ENCODE measurements at regions of chr17 and their contacts with region 1.

Region 1: DNA sequence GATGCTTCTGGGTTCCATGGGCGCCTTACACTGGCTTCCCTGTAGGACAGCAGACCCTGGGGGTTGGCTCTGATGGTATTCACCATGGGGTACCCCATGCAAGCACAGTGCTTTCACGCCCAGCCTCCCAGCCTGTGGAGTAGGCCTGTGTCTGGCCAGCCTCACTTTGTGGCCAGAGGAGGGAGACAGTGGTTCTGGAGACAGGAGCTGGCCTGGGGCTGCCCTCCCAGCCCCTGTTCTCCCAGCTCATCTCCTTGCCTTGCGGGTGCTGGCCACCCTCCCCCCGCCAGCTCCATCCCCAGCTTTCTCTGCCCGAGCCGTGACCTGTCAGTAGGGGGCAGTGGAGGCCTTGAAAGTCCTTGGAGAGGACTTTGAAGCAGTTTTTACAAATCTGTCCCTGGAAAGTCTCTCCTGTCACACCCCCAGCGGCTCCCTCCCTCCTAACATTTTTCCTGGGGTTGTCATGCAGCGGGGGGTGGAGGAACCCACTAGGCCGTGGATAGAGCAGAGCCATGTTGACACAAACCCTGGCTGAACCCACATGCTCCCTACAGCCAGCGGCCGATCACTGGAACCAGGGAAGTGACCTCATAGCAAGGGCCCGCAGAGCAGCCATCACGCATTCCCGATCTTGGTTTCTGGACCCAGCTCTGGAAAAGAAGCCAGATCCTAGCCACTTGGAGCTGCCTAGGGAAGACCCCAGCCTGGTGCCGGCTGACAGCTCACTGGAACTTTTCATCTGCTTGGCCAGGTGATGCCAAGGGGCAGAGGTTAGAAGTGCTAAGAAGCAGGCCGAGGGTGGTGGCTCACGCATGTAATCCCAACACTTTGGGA is 289.4 kb downstream of the SEC14L1 start:
- DNase-seq: peak; percentile 76
- H3K4me3 ChIP-seq: no peak overlapping the region
- H3K27ac ChIP-seq: peak overlapping the region; percentile 4
- H3K4me1 ChIP-seq: peaks cover 53% of the 10 kb centered on the region
- H3K27me3 ChIP-seq: no peaks in the 10 kb centered on the region
- CTCF ChIP-seq: peak; percentile 66 to 81

Region 2: DNA sequence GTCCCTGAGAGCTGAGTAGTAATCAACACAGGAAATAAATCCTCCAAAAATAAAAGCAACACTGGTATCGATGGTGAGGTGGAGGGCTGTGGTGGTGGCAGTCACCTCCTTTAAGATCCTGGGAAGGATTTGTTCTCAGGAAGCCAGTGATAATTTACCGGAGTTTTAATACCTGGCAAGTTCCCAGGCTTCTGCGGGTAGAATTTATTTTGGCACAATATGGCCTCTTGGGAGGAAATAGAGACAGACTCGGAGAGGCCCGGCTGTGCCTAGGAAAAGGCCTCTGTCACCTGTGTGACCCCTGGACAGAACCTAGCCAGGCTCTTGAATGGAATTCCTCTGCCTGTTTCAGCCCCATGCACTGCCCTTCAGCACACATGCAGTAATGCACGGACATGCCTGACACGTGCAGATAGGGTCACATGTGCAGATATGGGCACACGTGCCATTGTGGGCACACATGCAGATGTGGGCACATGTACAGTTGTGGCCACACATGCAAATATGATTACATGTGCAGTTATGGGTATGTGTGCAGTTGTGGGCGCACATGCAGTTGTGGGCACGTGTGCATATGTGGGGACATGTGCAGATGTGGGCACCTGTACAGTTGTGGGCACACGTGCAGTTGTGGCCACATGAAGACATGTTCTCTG is 528.5 kb before region 1 on chr17:
- CTCF ChIA-PET with region 1: no interaction called
- dilution Hi-C with region 1: no loop called
- in situ Hi-C with region 1: no loop called
- intact Hi-C with region 1: no loop called
- DNase-seq: no peak
- H3K4me3 ChIP-seq: no peak overlapping the region
- H3K27ac ChIP-seq: no peak overlapping the region
- H3K4me1 ChIP-seq: no peaks in the 10 kb centered on the region
- H3K27me3 ChIP-seq: no peaks in the 10 kb centered on the region
- CTCF ChIP-seq: no peak

Region 3: DNA sequence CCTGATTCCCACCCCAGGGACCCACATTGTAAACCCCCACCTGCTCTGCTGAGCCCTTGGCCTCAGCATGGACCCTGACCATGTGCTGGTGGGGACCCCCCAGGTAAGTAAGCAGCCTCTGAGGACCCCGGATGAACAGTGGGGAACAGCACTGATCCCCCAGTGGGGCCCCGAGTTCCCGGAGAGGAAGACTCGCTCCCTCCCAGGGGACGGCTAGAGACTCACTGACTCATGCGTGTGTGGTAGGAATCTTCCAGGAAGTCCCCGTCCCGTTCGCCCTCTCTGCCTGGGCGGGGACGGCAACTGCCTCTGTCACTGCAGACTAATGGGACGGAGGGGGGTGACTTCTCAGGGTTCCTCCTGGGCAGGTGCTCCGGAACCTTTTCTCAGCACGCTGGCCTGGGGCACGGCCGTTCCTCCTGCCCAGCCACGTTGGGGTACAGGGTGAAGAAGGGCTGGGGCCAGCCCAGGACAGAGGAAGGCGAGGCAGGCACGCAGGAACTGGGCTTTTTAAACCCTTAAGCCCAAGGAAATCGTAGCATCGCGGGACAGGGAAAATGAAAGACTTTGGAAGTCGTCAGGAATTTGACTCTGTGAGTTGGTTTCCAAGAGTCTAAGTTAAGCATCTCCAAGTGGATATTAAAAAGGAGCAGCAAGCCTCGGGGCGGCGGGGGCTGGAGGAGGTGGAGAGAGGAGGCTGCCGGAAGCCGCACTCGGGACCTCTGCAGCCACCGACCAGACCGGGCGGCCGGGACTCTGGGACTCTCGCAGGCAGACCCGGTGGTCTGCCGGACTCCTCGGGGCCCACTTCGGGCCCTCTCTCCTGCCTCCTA is 110.7 kb before region 1 on chr17:
- CTCF ChIA-PET with region 1: no interaction called
- dilution Hi-C with region 1: no loop called
- in situ Hi-C with region 1: loop called in 1 of 2 experiments (anchors 10 kb)
- intact Hi-C with region 1: no loop called
- DNase-seq: peak; percentile 86
- H3K4me3 ChIP-seq: peak overlapping the region; percentile 38 to 48 (median 41)
- H3K27ac ChIP-seq: peak overlapping the region; percentile 84
- H3K4me1 ChIP-seq: peaks cover 88% of the 10 kb centered on the region
- H3K27me3 ChIP-seq: no peaks in the 10 kb centered on the region
- CTCF ChIP-seq: no peak

Region 4: GRCh38 chr17:77343031-77343800 is 86.9 kb before region 1 on chr17:
- CTCF ChIA-PET with region 1: no interaction called
- dilution Hi-C with region 1: no loop called
- in situ Hi-C with region 1: loop called in 1 of 2 experiments (anchors 5 kb)
- intact Hi-C with region 1: no loop called
- DNase-seq: no peak
- H3K4me3 ChIP-seq: no peak overlapping the region
- H3K27ac ChIP-seq: no peak overlapping the region
- H3K4me1 ChIP-seq: peaks cover 8% of the 10 kb centered on the region
- H3K27me3 ChIP-seq: no peaks in the 10 kb centered on the region
- CTCF ChIP-seq: no peak

Region 5: GRCh38 chr17:77456951-77457548 is 26.9 kb after region 1 on chr17:
- CTCF ChIA-PET with region 1: no interaction called
- dilution Hi-C with region 1: no loop called
- in situ Hi-C with region 1: no loop called
- intact Hi-C with region 1: no loop called
- DNase-seq: no peak
- H3K4me3 ChIP-seq: no peak overlapping the region
- H3K27ac ChIP-seq: no peak overlapping the region
- H3K4me1 ChIP-seq: peaks cover 42% of the 10 kb centered on the region
- H3K27me3 ChIP-seq: no peaks in the 10 kb centered on the region
- CTCF ChIP-seq: no peak

Region 6: GRCh38 chr17:77471984-77472461 is 41.9 kb after region 1 on chr17:
- CTCF ChIA-PET with region 1: no interaction called
- dilution Hi-C with region 1: no loop called
- in situ Hi-C with region 1: loop called in 1 of 2 experiments (anchors 5 kb)
- intact Hi-C with region 1: loop called (anchors 1 kb)
- DNase-seq: peak; percentile 76
- H3K4me3 ChIP-seq: no peak overlapping the region
- H3K27ac ChIP-seq: peak overlapping the region; percentile 82
- H3K4me1 ChIP-seq: peaks cover 72% of the 10 kb centered on the region
- H3K27me3 ChIP-seq: no peaks in the 10 kb centered on the region
- CTCF ChIP-seq: no peak

Region 7: DNA sequence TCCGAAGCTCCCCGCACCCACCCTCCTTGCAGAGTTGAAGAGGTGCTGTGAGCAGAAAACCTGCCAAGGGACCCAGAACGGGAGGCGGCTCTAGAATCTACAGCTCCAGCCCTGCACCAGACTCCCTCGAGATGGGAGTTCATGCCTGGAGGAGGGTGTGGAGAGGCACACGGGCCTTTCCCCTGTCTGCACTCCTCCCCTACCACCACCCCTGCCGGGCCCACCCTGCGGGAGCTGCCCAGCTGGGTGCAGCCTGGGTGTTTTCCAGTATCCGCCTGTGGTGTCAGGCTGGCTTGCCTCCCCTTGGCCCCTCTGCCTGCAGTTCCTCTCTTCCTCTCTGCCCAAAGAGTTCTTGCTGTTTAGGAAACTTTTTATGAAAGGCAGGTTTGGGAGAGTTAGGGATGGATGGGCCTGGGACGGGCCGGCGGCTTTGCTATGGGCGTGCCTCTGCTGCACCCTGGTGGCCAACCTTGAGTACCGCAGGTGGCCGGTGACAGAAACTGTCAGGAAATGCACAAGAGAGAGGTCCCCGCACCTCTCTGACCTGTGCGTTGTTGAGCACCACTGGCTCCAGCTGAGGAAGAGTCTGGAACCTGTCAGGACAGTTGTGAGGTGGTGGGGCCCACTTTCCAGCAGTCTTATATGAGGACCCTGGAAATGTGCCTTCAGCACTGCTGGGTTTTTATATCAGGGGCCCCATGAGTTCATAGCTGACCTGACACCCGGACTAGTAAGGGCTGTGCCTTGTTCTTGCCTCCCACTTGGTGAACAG is 64.7 kb after region 1 on chr17:
- CTCF ChIA-PET with region 1: interaction called, 10 read pairs
- dilution Hi-C with region 1: no loop called
- in situ Hi-C with region 1: no loop called
- intact Hi-C with region 1: loop called (anchors 1 kb)
- DNase-seq: peak; percentile 46
- H3K4me3 ChIP-seq: no peak overlapping the region
- H3K27ac ChIP-seq: no peak overlapping the region
- H3K4me1 ChIP-seq: no peaks in the 10 kb centered on the region
- H3K27me3 ChIP-seq: no peaks in the 10 kb centered on the region
- CTCF ChIP-seq: peak; percentile 68 to 95